RWPE1 (cell line): ENCODE measurements at regions of chr7 and their contacts with region 1.

Region 1: GRCh38 chr7:97872025-97872669 is at the start of gene ASNS:
- DNase-seq: peak; percentile 89
- H3K27ac ChIP-seq: peak within 1 kb of the TSS; percentile 80
- CTCF ChIP-seq: no peak

Region 2: GRCh38 chr7:98014352-98014751 is 142.2 kb after region 1 on chr7:
- CTCF ChIA-PET with region 1: interaction called, 10 read pairs
- POLR2A ChIA-PET with region 1: no interaction called
- DNase-seq: no peak
- H3K27ac ChIP-seq: no peak overlapping the region
- CTCF ChIP-seq: no peak

Region 3: GRCh38 chr7:98051118-98051744 is 179.1 kb after region 1 on chr7:
- CTCF ChIA-PET with region 1: no interaction called
- POLR2A ChIA-PET with region 1: no interaction called
- DNase-seq: no peak
- H3K27ac ChIP-seq: 0 out of 2 replicates have a peak overlapping the region, but pooled peaks have one; percentile 0
- CTCF ChIP-seq: no peak